Endothelial cell of umbilical vein (primary cell): ENCODE measurements at regions of chr14 and their contacts with region 1.

Region 1: GRCh38 chr14:65824285-65824977 is 411.9 kb downstream of the FUT8 start:
- DNase-seq: peak; percentile 75
- H3K4me3 ChIP-seq: no peak overlapping the region
- H3K27ac ChIP-seq: no peak overlapping the region
- H3K4me1 ChIP-seq: no peaks in the 10 kb centered on the region
- H3K27me3 ChIP-seq: peaks cover 15 to 18% of the 10 kb centered on the region in 2 experiments
- CTCF ChIP-seq: peak; percentile 83 to 86
- POLR2A ChIP-seq: no peak

Region 2: DNA sequence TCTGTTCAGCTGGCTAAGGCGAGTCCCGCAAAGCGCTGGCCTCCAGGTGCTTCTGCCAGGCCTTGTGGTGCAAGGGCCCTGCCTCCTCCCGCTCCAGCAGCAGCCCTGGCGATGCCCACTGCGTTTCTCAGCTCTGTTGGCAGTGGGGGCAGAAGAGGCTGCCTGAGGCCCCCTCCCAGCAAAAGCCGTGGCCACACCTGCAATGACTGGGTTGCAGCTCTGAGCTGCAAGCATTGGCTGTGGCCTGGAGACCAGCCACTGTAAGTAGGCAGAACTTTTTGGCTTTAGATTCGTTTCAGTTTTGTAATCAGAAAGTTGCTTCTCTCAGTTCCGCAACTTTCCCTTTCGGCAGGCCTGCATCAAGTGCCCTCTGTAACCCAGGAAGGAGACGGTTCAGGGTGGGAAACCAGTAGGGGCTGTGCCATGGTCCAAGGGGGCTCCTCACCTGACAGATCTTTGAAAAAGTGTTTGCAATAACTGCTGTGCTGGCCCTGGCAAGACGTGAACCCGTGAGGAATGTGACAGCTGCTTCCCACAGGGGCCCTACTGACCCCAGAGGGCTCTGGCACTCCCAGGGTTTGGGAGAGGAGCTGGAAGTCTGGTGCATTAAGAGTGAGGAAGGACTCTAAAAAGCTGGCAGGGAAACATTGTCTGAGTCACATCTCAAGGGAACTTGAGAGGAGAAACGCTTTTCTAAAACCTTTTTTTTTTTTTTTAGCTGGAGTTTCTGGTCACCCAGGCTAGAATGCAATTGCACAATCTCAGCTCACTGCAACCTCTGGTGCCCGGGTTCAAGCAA is 667.7 kb before region 1 on chr14:
- CTCF ChIA-PET with region 1: interaction called, 286 read pairs
- POLR2A ChIA-PET with region 1: no interaction called
- dilution Hi-C with region 1: no loop called
- intact Hi-C with region 1: no loop called
- DNase-seq: no peak
- H3K4me3 ChIP-seq: no peak overlapping the region
- H3K27ac ChIP-seq: no peak overlapping the region
- H3K4me1 ChIP-seq: no peaks in the 10 kb centered on the region
- H3K27me3 ChIP-seq: no peaks in the 10 kb centered on the region
- CTCF ChIP-seq: no peak
- POLR2A ChIP-seq: no peak

Region 3: GRCh38 chr14:65170768-65171507 is 653.5 kb before region 1 on chr14:
- CTCF ChIA-PET with region 1: interaction called, 286 read pairs
- POLR2A ChIA-PET with region 1: no interaction called
- dilution Hi-C with region 1: no loop called
- intact Hi-C with region 1: no loop called
- DNase-seq: peak; percentile 70
- H3K4me3 ChIP-seq: peak overlapping the region; percentile 12 to 48 (median 31)
- H3K27ac ChIP-seq: no peak overlapping the region
- H3K4me1 ChIP-seq: peaks cover 10% of the 10 kb centered on the region
- H3K27me3 ChIP-seq: no peaks in the 10 kb centered on the region
- CTCF ChIP-seq: peak; percentile 46 to 57
- POLR2A ChIP-seq: no peak

Region 4: DNA sequence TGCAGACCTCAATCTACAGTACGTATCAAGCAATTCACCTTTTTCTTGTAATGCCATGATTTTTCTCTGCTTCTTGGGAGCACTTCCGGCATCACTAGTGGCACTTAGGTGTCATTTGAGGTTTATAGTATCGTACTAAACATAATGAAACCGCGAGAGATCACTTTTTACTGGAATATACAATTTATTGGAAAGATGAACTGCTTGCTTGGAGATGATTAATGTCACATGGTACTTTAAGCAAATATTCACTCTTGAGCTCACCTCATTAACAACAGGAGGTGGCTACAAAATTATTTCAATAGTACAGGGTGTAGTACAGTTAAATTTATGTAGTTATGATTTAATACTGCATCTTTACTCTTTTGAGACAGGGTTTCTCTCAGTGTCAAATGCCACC is 400.4 kb before region 1 on chr14:
- CTCF ChIA-PET with region 1: interaction called, 926 read pairs
- POLR2A ChIA-PET with region 1: no interaction called
- dilution Hi-C with region 1: no loop called
- intact Hi-C with region 1: no loop called
- DNase-seq: no peak
- H3K4me3 ChIP-seq: no peak overlapping the region
- H3K27ac ChIP-seq: no peak overlapping the region
- H3K4me1 ChIP-seq: peaks cover 2% of the 10 kb centered on the region
- H3K27me3 ChIP-seq: no peaks in the 10 kb centered on the region
- CTCF ChIP-seq: no peak
- POLR2A ChIP-seq: no peak

Region 5: GRCh38 chr14:65769151-65769550 is 55.3 kb before region 1 on chr14:
- CTCF ChIA-PET with region 1: interaction called, 5 read pairs
- POLR2A ChIA-PET with region 1: no interaction called
- dilution Hi-C with region 1: loop called (anchors 5 kb)
- intact Hi-C with region 1: no loop called
- DNase-seq: no peak
- H3K4me3 ChIP-seq: no peak overlapping the region
- H3K27ac ChIP-seq: no peak overlapping the region
- H3K4me1 ChIP-seq: no peaks in the 10 kb centered on the region
- H3K27me3 ChIP-seq: peaks cover 6% of the 10 kb centered on the region in 2 experiments
- CTCF ChIP-seq: no peak
- POLR2A ChIP-seq: no peak

Region 6: DNA sequence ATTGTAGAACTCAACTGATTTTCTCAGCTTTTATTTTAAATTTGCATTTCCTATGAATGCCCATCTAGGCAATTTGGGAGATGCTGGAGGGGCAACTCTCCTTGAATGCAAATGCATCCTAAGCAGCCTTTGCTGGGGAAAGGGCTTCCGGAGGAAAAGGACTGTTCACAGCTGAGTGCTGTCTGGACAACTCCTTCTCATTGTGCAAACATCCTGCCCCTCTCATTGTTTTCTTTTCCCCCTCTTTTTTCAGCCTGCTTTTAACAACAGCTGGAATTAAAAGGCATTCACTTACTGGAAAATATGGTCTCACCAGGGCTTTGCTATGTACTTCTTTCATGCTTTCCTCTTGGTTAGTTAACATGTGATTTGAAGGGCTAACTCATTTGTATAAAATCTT is 14.1 kb before region 1 on chr14:
- CTCF ChIA-PET with region 1: interaction called, 38 read pairs
- POLR2A ChIA-PET with region 1: no interaction called
- dilution Hi-C with region 1: no loop called
- intact Hi-C with region 1: no loop called
- DNase-seq: peak; percentile 69
- H3K4me3 ChIP-seq: no peak overlapping the region
- H3K27ac ChIP-seq: no peak overlapping the region
- H3K4me1 ChIP-seq: peaks cover 3% of the 10 kb centered on the region
- H3K27me3 ChIP-seq: peaks cover 0 to 5% of the 10 kb centered on the region in 2 experiments
- CTCF ChIP-seq: no peak
- POLR2A ChIP-seq: no peak

Region 7: GRCh38 chr14:65958664-65959562 is 134.5 kb after region 1 on chr14:
- CTCF ChIA-PET with region 1: interaction called, 11 read pairs
- POLR2A ChIA-PET with region 1: no interaction called
- dilution Hi-C with region 1: no loop called
- intact Hi-C with region 1: no loop called
- DNase-seq: peak; percentile 35
- H3K4me3 ChIP-seq: no peak overlapping the region
- H3K27ac ChIP-seq: no peak overlapping the region
- H3K4me1 ChIP-seq: no peaks in the 10 kb centered on the region
- H3K27me3 ChIP-seq: no peaks in the 10 kb centered on the region
- CTCF ChIP-seq: peak; percentile 5 to 16
- POLR2A ChIP-seq: no peak